AG04450 (cell line): ENCODE measurements at regions of chr15 and their contacts with region 1.

Region 1: GRCh38 chr15:91246998-91247397 is 146.9 kb downstream of the SV2B start:
- DNase-seq: no peak
- H3K4me3 ChIP-seq: no peak overlapping the region
- H3K27ac ChIP-seq: no peak overlapping the region
- H3K27me3 ChIP-seq: peaks cover 2% of the 10 kb centered on the region
- CTCF ChIP-seq: no peak

Region 2: GRCh38 chr15:90571063-90571541 is 675.9 kb before region 1 on chr15:
- CTCF ChIA-PET with region 1: no interaction called
- POLR2A ChIA-PET with region 1: no interaction called
- DNase-seq: no peak
- H3K4me3 ChIP-seq: no peak overlapping the region
- H3K27ac ChIP-seq: no peak overlapping the region
- H3K27me3 ChIP-seq: no peaks in the 10 kb centered on the region
- CTCF ChIP-seq: no peak

Region 3: DNA sequence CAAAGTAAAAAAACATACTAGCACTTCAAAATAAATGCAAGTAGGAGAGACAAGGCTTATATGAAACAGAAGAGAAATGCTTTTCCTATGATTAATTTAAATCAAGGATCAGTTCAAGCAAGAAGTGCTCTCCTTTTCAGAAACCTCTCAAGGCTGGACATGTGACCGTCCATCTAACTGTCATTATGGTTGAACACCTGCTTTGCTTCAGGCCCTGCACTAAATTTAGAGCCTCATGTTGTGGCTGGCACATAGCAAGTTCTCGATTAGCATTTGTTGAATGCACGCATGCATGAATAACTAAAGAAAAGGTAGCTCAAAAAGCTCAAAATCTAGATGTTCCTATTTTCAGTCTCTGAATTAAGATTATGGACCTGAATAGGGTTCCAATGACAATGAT is 64.9 kb before region 1 on chr15:
- CTCF ChIA-PET with region 1: no interaction called
- POLR2A ChIA-PET with region 1: no interaction called
- DNase-seq: no peak
- H3K4me3 ChIP-seq: no peak overlapping the region
- H3K27ac ChIP-seq: no peak overlapping the region
- H3K27me3 ChIP-seq: no peaks in the 10 kb centered on the region
- CTCF ChIP-seq: no peak

Region 4: DNA sequence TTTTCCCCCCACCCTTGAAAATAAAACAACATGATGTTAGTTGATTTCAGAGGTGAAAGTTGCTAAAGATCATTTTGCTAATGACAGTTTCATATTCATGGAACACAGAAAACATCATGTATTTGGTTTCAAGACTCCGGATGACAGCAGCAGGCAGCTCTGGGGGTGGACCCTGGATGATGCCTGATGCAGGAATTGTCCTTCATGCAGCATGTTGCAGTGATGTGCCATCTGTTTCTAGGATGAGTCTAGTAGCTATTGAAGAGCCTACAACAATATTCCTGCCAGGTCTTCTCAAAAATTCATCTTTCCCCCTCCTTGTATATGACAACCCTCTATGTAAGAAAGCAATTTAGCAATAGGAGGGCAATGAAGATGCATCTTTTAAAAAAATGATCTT is 38.6 kb before region 1 on chr15:
- CTCF ChIA-PET with region 1: no interaction called
- POLR2A ChIA-PET with region 1: no interaction called
- DNase-seq: no peak
- H3K4me3 ChIP-seq: no peak overlapping the region
- H3K27ac ChIP-seq: no peak overlapping the region
- H3K27me3 ChIP-seq: peaks cover 2% of the 10 kb centered on the region
- CTCF ChIP-seq: no peak

Region 5: DNA sequence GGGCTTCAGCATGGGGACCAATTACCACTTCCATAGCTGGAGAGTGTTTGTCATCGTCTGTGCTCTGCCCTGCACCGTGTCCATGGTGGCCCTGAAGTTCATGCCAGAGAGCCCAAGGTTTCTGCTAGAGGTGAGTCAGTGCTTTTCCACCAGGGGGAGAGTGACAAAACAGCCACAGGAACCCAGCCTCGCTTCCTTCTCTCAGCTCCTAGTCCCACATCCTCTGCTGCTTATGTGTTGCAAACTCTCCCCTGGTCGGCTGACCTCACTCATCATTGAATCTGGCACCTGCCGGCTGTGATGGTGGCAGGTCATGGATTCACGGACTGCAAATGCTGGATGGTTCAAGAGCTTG is 11.4 kb after region 1 on chr15:
- CTCF ChIA-PET with region 1: interaction called, 13 read pairs
- POLR2A ChIA-PET with region 1: no interaction called
- DNase-seq: no peak
- H3K4me3 ChIP-seq: no peak overlapping the region
- H3K27ac ChIP-seq: no peak overlapping the region
- H3K27me3 ChIP-seq: no peaks in the 10 kb centered on the region
- CTCF ChIP-seq: 0 out of 2 replicates have a peak, but pooled peaks have one; percentile 4